ENCODE measurements at regions of chr6 and their contacts with region 1.

Region 1: GRCh38 chr6:16964553-16965501 is 137.0 kb upstream of the STMND1 start:
- DNase-seq: peak; percentile 79
- H3K4me3 Mint-ChIP-seq: no peak overlapping the region
- H3K27ac Mint-ChIP-seq: no peak overlapping the region
- H3K4me1 Mint-ChIP-seq: peaks cover 5% of the 10 kb centered on the region
- H3K27me3 Mint-ChIP-seq: peaks cover 23% of the 10 kb centered on the region

Region 2: DNA sequence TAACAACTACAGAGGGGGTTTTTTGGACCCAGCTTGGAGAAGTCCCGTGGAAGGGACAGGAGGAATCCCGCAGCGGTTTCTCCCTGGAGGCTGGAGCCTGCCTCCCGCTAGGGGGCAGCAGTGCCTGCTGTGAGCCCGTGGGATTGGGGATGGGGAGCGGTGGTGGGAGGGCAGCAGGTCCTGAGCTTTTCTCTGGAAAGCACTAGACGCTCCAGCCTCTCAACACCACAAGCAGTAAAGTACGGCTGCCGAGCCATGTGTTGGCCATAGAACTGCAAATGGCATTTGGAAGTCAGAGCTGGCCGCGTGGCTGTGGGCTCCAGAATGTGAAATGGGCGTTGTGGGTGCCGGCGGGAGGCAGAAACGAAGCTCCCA is 678.7 kb before region 1 on chr6:
- CTCF ChIA-PET with region 1: interaction called, 4 read pairs
- intact Hi-C with region 1: loop called (anchors 1 kb)
- DNase-seq: peak; percentile 28
- H3K4me3 Mint-ChIP-seq: no peak overlapping the region
- H3K27ac Mint-ChIP-seq: no peak overlapping the region
- H3K4me1 Mint-ChIP-seq: no peaks in the 10 kb centered on the region
- H3K27me3 Mint-ChIP-seq: no peaks in the 10 kb centered on the region

Region 3: GRCh38 chr6:16409531-16410441 is 555.0 kb before region 1 on chr6:
- CTCF ChIA-PET with region 1: interaction called, 4 read pairs
- intact Hi-C with region 1: loop called (anchors 10 kb)
- DNase-seq: peak; percentile 75
- H3K4me3 Mint-ChIP-seq: peak overlapping the region; percentile 30
- H3K27ac Mint-ChIP-seq: peak overlapping the region; percentile 53
- H3K4me1 Mint-ChIP-seq: peaks cover 31% of the 10 kb centered on the region
- H3K27me3 Mint-ChIP-seq: no peaks in the 10 kb centered on the region

Region 4: GRCh38 chr6:16471222-16471909 is 493.5 kb before region 1 on chr6:
- CTCF ChIA-PET with region 1: no interaction called
- intact Hi-C with region 1: no loop called
- DNase-seq: no peak
- H3K4me3 Mint-ChIP-seq: no peak overlapping the region
- H3K27ac Mint-ChIP-seq: peak overlapping the region; percentile 68
- H3K4me1 Mint-ChIP-seq: peaks cover 60% of the 10 kb centered on the region
- H3K27me3 Mint-ChIP-seq: no peaks in the 10 kb centered on the region

Region 5: DNA sequence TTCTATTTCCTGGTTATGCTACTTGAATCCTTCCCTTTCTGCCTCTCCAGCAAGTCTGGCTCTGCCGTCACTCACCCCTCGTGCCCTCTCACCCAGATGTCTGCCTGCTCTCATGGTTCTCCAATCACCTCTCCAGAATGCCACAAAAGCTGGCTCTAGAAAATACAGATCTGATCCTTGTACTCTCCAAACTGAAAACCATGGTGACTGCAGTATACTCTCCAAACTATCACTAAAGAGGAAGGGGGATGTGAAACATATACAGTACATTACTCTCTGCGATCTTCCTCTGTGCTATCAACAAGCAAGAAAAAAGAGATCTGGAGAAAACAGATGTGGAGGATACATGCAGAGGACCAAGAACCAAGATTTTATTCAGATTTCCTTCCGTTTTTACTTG is 294.6 kb before region 1 on chr6:
- CTCF ChIA-PET with region 1: no interaction called
- intact Hi-C with region 1: no loop called
- DNase-seq: no peak
- H3K4me3 Mint-ChIP-seq: no peak overlapping the region
- H3K27ac Mint-ChIP-seq: peak overlapping the region; percentile 25
- H3K4me1 Mint-ChIP-seq: peaks cover 38% of the 10 kb centered on the region
- H3K27me3 Mint-ChIP-seq: no peaks in the 10 kb centered on the region

Region 6: GRCh38 chr6:16770701-16771569 is 193.9 kb before region 1 on chr6:
- CTCF ChIA-PET with region 1: interaction called, 5 read pairs
- intact Hi-C with region 1: loop called (anchors 1 kb)
- DNase-seq: peak; percentile 82
- H3K4me3 Mint-ChIP-seq: no peak overlapping the region
- H3K27ac Mint-ChIP-seq: no peak overlapping the region
- H3K4me1 Mint-ChIP-seq: peaks cover 46% of the 10 kb centered on the region
- H3K27me3 Mint-ChIP-seq: no peaks in the 10 kb centered on the region

Region 7: DNA sequence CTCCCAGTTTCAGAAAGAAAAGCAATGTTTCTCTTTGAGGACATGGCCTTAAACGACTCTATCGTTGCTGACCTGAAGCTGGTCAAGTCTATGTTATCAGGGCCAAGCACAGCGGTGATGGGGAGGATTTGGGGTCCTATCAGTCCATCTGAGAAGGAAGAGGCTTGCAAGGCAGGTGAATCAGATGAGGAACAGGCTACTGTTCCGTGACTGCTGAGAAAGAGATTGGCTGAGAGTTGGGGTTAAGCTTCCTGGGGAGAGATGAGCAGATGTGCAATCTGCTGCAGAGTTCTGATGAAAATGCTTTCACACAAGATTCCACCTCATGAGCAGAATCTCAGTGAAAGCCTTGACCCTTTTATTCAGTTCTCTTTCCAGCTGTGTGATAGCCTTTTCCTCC is 31.3 kb before region 1 on chr6:
- CTCF ChIA-PET with region 1: no interaction called
- intact Hi-C with region 1: no loop called
- DNase-seq: no peak
- H3K4me3 Mint-ChIP-seq: no peak overlapping the region
- H3K27ac Mint-ChIP-seq: no peak overlapping the region
- H3K4me1 Mint-ChIP-seq: no peaks in the 10 kb centered on the region
- H3K27me3 Mint-ChIP-seq: peaks cover 33% of the 10 kb centered on the region

Region 8: DNA sequence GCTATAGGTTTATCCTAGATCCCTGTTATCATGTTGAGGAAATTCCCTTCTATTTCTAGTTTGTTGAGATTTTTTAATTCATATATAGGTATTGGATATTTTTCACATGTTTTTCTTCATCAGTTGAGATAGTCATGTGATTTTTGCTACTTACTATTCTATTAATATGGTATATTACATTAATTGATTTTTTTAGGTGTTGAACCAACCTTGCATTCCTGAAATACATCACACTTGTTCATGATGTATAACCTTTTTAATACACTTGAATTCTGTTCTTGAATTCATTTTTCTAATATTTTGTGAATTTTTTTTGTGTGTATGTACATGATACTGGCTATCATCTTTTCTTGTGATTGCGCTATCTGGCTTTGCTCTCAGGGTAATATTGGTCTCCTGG is 403.0 kb after region 1 on chr6:
- CTCF ChIA-PET with region 1: no interaction called
- intact Hi-C with region 1: no loop called
- DNase-seq: no peak
- H3K4me3 Mint-ChIP-seq: no peak overlapping the region
- H3K27ac Mint-ChIP-seq: no peak overlapping the region
- H3K4me1 Mint-ChIP-seq: no peaks in the 10 kb centered on the region
- H3K27me3 Mint-ChIP-seq: no peaks in the 10 kb centered on the region

Measured in activated naive CD4-positive, alpha-beta T cell treated with anti-CD3 and anti-CD28 coated beads for 36 hours (primary cell).